GM12878 (cell line): ENCODE measurements at regions of chr9 and their contacts with region 1.

Region 1: DNA sequence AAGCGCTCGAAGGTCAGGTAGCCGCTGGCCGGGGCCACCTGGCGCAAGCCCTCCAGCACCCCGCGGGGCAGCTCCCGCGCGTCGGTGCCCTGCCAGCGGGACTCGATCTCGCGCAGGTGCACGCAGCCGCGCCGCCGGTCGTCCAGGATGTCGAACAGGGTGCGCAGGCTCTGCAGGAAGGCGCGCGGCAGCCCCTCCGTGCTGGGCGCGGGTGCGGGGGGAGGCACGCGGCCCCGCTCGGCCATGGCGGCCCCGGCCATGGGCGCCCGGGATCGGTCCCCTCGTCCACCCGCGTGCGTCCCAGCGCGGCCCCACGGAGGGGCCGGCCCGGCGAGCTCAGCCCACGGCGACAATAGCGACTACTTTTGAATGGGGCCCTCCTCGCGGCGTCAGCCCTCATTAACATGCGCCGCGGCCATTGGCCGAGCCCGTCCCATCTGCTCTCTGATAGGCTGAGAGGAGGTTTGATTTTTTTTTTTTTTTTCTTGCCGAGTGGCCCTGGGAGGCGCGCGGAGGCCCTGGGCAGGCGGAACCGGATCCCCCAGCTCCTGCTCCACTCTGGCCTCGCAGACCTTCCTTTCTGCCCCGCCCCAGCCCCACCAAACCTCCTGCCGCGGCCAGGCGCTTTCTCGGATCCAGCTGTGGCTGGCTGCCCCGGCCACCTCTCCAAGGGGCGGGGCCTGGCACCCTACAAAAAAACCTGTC is at the start of gene SAPCD2:
- DNase-seq: no peak
- ATAC-seq: peak; percentile 88
- H3K4me3 ChIP-seq: peak within 1 kb of the TSS; percentile 80
- H3K27ac ChIP-seq: peak within 1 kb of the TSS; percentile 70
- H3K4me1 ChIP-seq: peaks cover 33% of the 10 kb centered on the region
- H3K27me3 ChIP-seq: no peaks in the 10 kb centered on the region
- CTCF ChIP-seq: no peak
- EP300 ChIP-seq: no peak
- POLR2A ChIP-seq: peak; percentile 69
- RAD21 ChIP-seq: no peak
- polyA plus RNA-seq, gene SAPCD2: 1.6 to 2.0 TPM

Region 2: DNA sequence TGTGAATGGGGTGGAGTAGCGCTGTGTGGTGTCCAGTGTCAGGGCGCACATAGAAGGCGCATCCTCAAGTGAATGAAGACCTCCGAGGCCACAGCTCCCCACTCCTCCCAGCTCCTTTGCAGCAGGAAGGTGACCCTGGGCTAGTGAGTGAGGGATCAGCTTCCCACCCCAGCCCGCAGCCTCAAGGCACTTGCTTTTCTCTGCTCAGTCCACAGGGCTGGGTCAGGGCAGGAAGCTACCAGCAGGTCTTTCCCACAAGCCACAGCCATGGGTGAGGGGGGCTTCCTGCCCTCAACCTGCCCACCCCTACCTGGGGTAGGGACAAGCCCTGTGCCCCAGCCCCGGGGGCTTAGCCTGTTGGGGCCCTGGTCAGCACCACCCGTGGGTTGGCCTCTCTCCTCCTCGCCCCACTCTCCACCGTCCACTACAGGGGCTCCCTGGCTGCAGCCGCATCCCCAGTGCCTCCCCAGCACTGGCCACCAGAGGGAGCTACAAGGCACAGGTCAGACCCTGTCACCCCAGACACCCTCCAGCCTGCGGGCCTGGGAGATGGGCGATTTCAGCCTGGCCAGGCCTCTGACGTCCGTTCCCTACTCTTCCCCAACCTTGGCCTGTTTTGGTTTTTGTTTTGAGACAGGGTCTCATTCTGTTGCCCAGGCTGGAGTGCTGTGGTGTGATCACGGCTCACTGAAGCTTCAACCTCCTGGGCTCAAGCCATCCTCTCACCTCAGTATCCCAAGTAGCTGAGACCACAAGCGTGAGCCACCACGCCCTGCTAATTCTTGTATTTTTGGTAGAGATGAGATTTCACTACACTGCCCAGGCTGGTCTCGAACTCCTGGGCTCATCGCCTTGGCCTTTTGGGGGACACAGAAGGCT is 41.1 kb before region 1 on chr9:
- CTCF ChIA-PET with region 1: interaction called, 46 read pairs
- POLR2A ChIA-PET with region 1: interaction called, 4 read pairs
- RAD21 ChIA-PET with region 1: interaction called, 15 read pairs
- SMC1A ChIA-PET with region 1: interaction called, 12 read pairs
- in situ Hi-C with region 1: no loop called
- intact Hi-C with region 1: no loop called
- DNase-seq: no peak
- ATAC-seq: peak; percentile 86
- H3K4me3 ChIP-seq: no peak overlapping the region
- H3K27ac ChIP-seq: no peak overlapping the region
- H3K4me1 ChIP-seq: peaks cover 41% of the 10 kb centered on the region
- H3K27me3 ChIP-seq: peaks cover 0 to 2% of the 10 kb centered on the region in 2 experiments; a peak in 2 of 4 replicates
- CTCF ChIP-seq: peak; percentile 84 to 97 (median 93)
- EP300 ChIP-seq: no peak
- POLR2A ChIP-seq: no peak
- RAD21 ChIP-seq: peak; percentile 34; the same call in 1 of the 2 replicates

Region 3: GRCh38 chr9:137057545-137057944 is 12.8 kb before region 1 on chr9:
- CTCF ChIA-PET with region 1: interaction called, 14 read pairs
- POLR2A ChIA-PET with region 1: interaction called, 4 read pairs
- RAD21 ChIA-PET with region 1: interaction called, 3 read pairs
- SMC1A ChIA-PET with region 1: no interaction called
- in situ Hi-C with region 1: no loop called
- intact Hi-C with region 1: no loop called
- DNase-seq: no peak
- ATAC-seq: no peak
- H3K4me3 ChIP-seq: no peak overlapping the region
- H3K27ac ChIP-seq: no peak overlapping the region
- H3K4me1 ChIP-seq: no peaks in the 10 kb centered on the region
- H3K27me3 ChIP-seq: peaks cover 4 to 12% of the 10 kb centered on the region in 2 experiments; a peak in 3 of 4 replicates
- CTCF ChIP-seq: no peak
- EP300 ChIP-seq: no peak
- POLR2A ChIP-seq: no peak
- RAD21 ChIP-seq: no peak

Region 4: GRCh38 chr9:137095664-137096517 is 25.5 kb after region 1 on chr9:
- CTCF ChIA-PET with region 1: interaction called, 41 read pairs
- POLR2A ChIA-PET with region 1: interaction called, 16 read pairs
- RAD21 ChIA-PET with region 1: interaction called, 24 read pairs
- SMC1A ChIA-PET with region 1: interaction called, 13 read pairs
- in situ Hi-C with region 1: no loop called
- intact Hi-C with region 1: no loop called
- DNase-seq: peak; percentile 61
- ATAC-seq: peak; percentile 99
- H3K4me3 ChIP-seq: peak overlapping the region; percentile 49; the same call in 1 of the 2 replicates
- H3K27ac ChIP-seq: peak overlapping the region; percentile 61
- H3K4me1 ChIP-seq: peaks cover 11% of the 10 kb centered on the region
- H3K27me3 ChIP-seq: no peaks in the 10 kb centered on the region
- CTCF ChIP-seq: peak; percentile 63 to 84 (median 67)
- EP300 ChIP-seq: peak in 1 of 2 experiments; percentile 52; a peak in 2 of 4 replicates
- POLR2A ChIP-seq: peak; percentile 48; the same call in 1 of the 2 replicates
- RAD21 ChIP-seq: no peak

Region 5: GRCh38 chr9:137269231-137269772 is 198.9 kb after region 1 on chr9:
- CTCF ChIA-PET with region 1: no interaction called
- POLR2A ChIA-PET with region 1: no interaction called
- RAD21 ChIA-PET with region 1: no interaction called
- SMC1A ChIA-PET with region 1: no interaction called
- in situ Hi-C with region 1: no loop called
- intact Hi-C with region 1: no loop called
- DNase-seq: peak; percentile 34
- ATAC-seq: peak; percentile 64
- H3K4me3 ChIP-seq: peak overlapping the region; percentile 46; the same call in 1 of the 2 replicates
- H3K27ac ChIP-seq: peak overlapping the region; percentile 47
- H3K4me1 ChIP-seq: peaks cover 22% of the 10 kb centered on the region
- H3K27me3 ChIP-seq: no peaks in the 10 kb centered on the region
- CTCF ChIP-seq: no peak
- EP300 ChIP-seq: no peak
- POLR2A ChIP-seq: no peak; the same call in 1 of the 2 replicates
- RAD21 ChIP-seq: no peak